Naive thymus-derived CD4-positive, alpha-beta T cell (primary cell): ENCODE measurements at regions of chr4 and their contacts with region 1.

Region 1: DNA sequence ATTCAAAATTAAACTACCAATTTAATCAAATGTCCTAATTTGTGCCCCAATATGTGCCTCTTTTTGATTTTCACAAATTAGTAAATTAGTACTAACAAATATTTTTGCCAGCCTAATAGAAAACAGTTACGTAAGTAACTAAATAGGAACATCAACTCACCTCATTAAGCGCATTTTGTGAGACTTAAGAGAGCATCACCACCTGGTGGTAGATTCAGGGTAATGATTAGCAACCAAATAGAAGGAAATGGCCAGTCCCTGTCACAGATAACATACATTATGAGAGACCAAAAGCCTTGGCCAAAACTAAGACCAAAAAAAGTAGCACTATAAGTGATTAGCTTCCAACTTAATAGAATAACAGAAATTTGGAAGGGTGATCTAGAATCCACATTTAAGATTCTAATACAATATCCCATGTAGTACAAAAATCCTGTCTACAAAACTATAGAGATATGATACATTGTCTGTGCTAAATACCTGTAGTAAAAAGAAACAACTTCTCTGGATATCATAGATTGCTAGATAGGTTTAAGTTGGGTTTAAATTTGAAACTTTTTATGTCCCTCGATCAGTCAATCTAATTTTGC is 46.7 kb downstream of the C4orf46 start:
- DNase-seq: peak in 1 of 9 donors; percentile 8
- ATAC-seq: peak; percentile 62
- H3K4me3 ChIP-seq: no peak overlapping the region
- H3K4me3 Mint-ChIP-seq: no peak overlapping the region
- H3K27ac ChIP-seq: no peak overlapping the region
- H3K27ac Mint-ChIP-seq: no peak overlapping the region
- H3K4me1 ChIP-seq: no peaks in the 10 kb centered on the region
- H3K4me1 Mint-ChIP-seq: no peaks in the 10 kb centered on the region
- H3K27me3 ChIP-seq: no peaks in the 10 kb centered on the region
- H3K27me3 Mint-ChIP-seq: peaks cover 18 to 31% (median 28%) of the 10 kb centered on the region in 5 donors

Region 2: DNA sequence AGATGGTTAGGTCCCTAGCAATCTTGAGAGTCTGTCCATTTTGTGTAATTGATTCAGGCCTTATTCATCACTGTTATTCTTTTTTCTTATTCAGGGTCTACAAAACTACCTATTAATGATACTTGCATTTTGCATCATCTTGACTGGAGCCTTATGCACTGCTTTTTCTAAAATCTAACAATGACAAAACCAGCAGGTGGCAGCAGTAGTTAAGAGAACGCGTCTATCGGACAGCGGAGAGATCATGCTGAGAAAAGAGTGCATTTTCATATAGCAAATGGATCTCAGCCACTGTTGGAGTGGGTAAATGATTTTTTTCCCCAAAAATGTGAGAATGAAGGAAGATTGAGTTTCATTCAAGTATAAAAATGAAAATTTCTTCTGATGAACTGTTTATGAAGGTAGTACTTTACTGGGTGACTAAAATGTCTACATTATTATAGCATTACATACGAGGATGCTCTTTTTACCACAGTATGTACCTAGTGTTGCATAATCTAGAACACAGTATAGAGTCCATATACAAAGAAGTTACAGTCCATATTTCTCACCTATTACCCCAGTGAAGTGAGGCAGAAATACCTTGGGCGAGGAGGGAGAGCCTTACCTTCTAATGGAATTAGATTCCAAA is 371.5 kb before region 1 on chr4:
- CTCF ChIA-PET with region 1: no interaction called
- POLR2A ChIA-PET with region 1: no interaction called
- intact Hi-C with region 1: loop called in 1 of 2 experiments (anchors 1 kb)
- DNase-seq: peak in 7 of 9 donors; percentile 2 to 51 (median 26)
- ATAC-seq: peak; percentile 73
- H3K4me3 ChIP-seq: no peak overlapping the region
- H3K4me3 Mint-ChIP-seq: peak overlapping the region in 1 of 10 donors; percentile 19
- H3K27ac ChIP-seq: no peak overlapping the region
- H3K27ac Mint-ChIP-seq: no peak overlapping the region
- H3K4me1 ChIP-seq: no peaks in the 10 kb centered on the region
- H3K4me1 Mint-ChIP-seq: peaks cover 3 to 14% (median 12%) of the 10 kb centered on the region in 7 donors
- H3K27me3 ChIP-seq: peaks cover 0 to 5% of the 10 kb centered on the region in 2 donors
- H3K27me3 Mint-ChIP-seq: peaks cover 0 to 13% (median 9%) of the 10 kb centered on the region in 5 donors

Region 3: GRCh38 chr4:158496030-158496741 is 128.8 kb before region 1 on chr4:
- CTCF ChIA-PET with region 1: no interaction called
- POLR2A ChIA-PET with region 1: no interaction called
- intact Hi-C with region 1: loop called in 1 of 2 experiments (anchors 2 kb)
- DNase-seq: peak in 2 of 9 donors; percentile 1 to 32
- ATAC-seq: no peak
- H3K4me3 ChIP-seq: no peak overlapping the region
- H3K4me3 Mint-ChIP-seq: no peak overlapping the region
- H3K27ac ChIP-seq: no peak overlapping the region
- H3K27ac Mint-ChIP-seq: no peak overlapping the region
- H3K4me1 ChIP-seq: no peaks in the 10 kb centered on the region
- H3K4me1 Mint-ChIP-seq: no peaks in the 10 kb centered on the region
- H3K27me3 ChIP-seq: no peaks in the 10 kb centered on the region
- H3K27me3 Mint-ChIP-seq: peaks cover 0 to 16% (median 7%) of the 10 kb centered on the region in 5 donors